Tibial artery (tissue), 4 donors: ENCODE measurements at regions of chr15 and their contacts with region 1.

Region 1: DNA sequence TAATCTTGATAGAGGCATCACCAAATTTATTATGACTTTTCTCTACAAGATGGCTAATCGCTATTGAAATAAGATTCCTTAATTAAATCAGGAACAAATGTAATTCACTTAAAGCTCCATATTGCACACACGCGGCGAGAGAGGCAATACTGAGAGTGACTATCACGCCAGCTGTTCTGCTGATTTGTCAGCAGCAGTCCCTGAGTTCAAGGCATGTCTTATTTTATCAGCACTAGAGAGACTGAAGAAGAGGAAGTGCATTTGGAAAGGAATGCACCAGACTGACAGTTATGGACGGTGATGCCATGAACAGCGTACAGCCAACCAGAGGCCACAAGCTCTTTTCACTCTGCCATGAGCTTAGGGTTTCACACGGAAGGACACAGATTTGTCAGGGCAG is 83.6 kb upstream of the SLCO3A1 start:
- DNase-seq: no peak
- H3K4me3 ChIP-seq: no peak overlapping the region
- H3K27ac ChIP-seq: no peak overlapping the region
- H3K4me1 ChIP-seq: no peaks in the 10 kb centered on the region
- H3K27me3 ChIP-seq: no peaks in the 10 kb centered on the region
- CTCF ChIP-seq: no peak

Region 2: DNA sequence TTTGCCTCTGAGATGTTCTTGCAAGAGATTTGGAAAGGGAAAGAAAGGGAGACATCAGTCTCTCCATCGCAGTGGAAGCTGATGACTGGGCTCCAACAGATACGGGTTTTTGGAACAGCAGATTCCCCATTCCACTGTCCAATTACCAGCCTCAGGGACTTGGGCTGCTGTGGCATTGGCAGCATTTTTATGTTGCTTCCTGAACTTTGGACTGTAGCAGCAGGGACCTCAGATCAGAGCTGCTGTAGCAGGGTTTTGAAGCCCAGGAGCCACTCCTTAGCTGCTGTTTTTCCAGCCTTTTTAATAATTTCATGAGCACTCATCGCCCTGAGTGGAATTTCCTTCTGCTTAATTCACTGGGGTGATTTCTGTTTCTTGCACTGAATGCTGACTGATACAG is 52.1 kb before region 1 on chr15:
- intact Hi-C with region 1: loop called (anchors 5 kb)
- DNase-seq: no peak
- H3K4me3 ChIP-seq: no peak overlapping the region
- H3K27ac ChIP-seq: no peak overlapping the region
- H3K4me1 ChIP-seq: no peaks in the 10 kb centered on the region
- H3K27me3 ChIP-seq: peaks cover 0 to 2% of the 10 kb centered on the region in 2 donors
- CTCF ChIP-seq: no peak

Region 3: DNA sequence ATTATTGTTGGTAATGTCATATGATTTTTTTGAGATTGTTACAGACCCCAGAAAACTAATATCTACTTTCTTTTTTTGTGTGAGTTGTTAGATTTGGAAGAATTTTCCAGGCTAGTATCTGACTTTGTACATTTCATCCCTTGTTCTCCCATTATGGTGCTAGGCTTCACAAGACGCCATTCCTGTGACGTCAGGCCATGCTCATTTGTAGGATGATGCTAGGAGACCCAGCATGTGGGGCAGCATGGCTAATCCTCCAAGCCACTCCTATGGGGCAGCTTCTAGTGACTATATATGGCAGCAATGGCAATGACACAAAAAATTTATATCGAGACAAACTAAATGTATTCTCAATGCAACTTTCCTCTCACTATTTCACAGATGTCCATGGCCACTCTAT is 38.4 kb before region 1 on chr15:
- intact Hi-C with region 1: loop called (anchors 2 kb)
- DNase-seq: no peak
- H3K4me3 ChIP-seq: no peak overlapping the region
- H3K27ac ChIP-seq: no peak overlapping the region
- H3K4me1 ChIP-seq: no peaks in the 10 kb centered on the region
- H3K27me3 ChIP-seq: peaks cover 0 to 13% of the 10 kb centered on the region in 2 donors
- CTCF ChIP-seq: no peak